HCT116 (cell line): ENCODE measurements at regions of chr1 and their contacts with region 1.

Region 1: GRCh38 chr1:223133824-223134435 is 9.1 kb downstream of the TLR5 start:
- DNase-seq: peak; percentile 74
- ATAC-seq: peak; percentile 86
- H3K4me3 ChIP-seq: peak overlapping the region; percentile 31 to 50
- H3K27ac ChIP-seq: no peak overlapping the region
- H3K4me1 ChIP-seq: peaks cover 10 to 30% of the 10 kb centered on the region in 2 experiments
- H3K27me3 ChIP-seq: no peaks in the 10 kb centered on the region
- CTCF ChIP-seq: peak; percentile 82 to 93 (median 88)
- POLR2A ChIP-seq: no peak
- RAD21 ChIP-seq: peak; percentile 85

Region 2: DNA sequence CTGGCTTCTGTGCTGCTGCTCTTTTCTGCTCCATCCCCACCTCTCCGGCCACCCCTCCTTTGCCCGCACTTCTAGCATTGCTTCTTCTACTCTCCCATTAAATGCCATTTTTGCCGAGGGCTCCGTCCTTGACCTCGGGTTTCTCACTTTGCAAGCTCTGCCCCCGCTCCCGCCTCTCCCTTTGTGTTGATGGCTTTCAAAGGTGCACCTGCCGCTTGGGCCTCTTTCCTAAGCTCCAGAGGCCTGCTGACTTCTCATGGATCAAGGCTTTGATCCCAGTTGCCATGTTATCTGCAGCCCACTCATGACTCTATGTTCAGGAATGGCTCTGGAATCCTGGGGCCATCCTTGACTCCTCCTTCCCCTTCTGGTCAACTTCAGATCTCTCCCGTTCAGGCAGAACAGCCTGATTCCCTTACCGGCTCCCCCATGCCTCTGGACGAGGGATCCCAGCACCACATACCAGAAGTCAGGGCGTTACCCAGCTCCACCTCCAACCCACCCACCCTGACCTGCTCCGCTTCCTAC is 45.2 kb before region 1 on chr1:
- CTCF ChIA-PET with region 1: interaction called, 27 read pairs
- POLR2A ChIA-PET with region 1: no interaction called
- RAD21 ChIA-PET with region 1: no interaction called
- intact Hi-C with region 1: no loop called
- DNase-seq: no peak
- ATAC-seq: no peak
- H3K4me3 ChIP-seq: no peak overlapping the region
- H3K27ac ChIP-seq: no peak overlapping the region
- H3K4me1 ChIP-seq: no peaks in the 10 kb centered on the region
- H3K27me3 ChIP-seq: no peaks in the 10 kb centered on the region
- CTCF ChIP-seq: no peak
- POLR2A ChIP-seq: no peak
- RAD21 ChIP-seq: no peak

Region 3: GRCh38 chr1:223244366-223245103 is 110.6 kb after region 1 on chr1:
- CTCF ChIA-PET with region 1: interaction called, 10 read pairs
- POLR2A ChIA-PET with region 1: no interaction called
- RAD21 ChIA-PET with region 1: no interaction called
- intact Hi-C with region 1: no loop called
- DNase-seq: no peak
- ATAC-seq: peak; percentile 49; the same call in 1 of the 2 replicates
- H3K4me3 ChIP-seq: no peak overlapping the region
- H3K27ac ChIP-seq: no peak overlapping the region
- H3K4me1 ChIP-seq: peaks cover 0 to 7% of the 10 kb centered on the region in 2 experiments; a peak in 1 of 4 replicates
- H3K27me3 ChIP-seq: no peaks in the 10 kb centered on the region
- CTCF ChIP-seq: peak; percentile 6 to 44 (median 16); a peak in 1 of 6 replicates
- POLR2A ChIP-seq: no peak
- RAD21 ChIP-seq: peak; percentile 66

Region 4: GRCh38 chr1:223628233-223629125 is 494.5 kb after region 1 on chr1:
- CTCF ChIA-PET with region 1: interaction called, 11 read pairs
- POLR2A ChIA-PET with region 1: no interaction called
- RAD21 ChIA-PET with region 1: no interaction called
- intact Hi-C with region 1: no loop called
- DNase-seq: peak; percentile 54
- ATAC-seq: peak; percentile 99
- H3K4me3 ChIP-seq: no peak overlapping the region
- H3K27ac ChIP-seq: no peak overlapping the region
- H3K4me1 ChIP-seq: peaks cover 0 to 3% of the 10 kb centered on the region in 2 experiments; a peak in 1 of 4 replicates
- H3K27me3 ChIP-seq: no peaks in the 10 kb centered on the region; the same call in 1 of the 2 replicates
- CTCF ChIP-seq: peak; percentile 51 to 93 (median 86); a peak in 5 of 6 replicates
- POLR2A ChIP-seq: no peak
- RAD21 ChIP-seq: peak; percentile 46